T-cell (primary cell): ENCODE measurements at regions of chr14 and their contacts with region 1.

Region 1: GRCh38 chr14:53055003-53055402 is 98.1 kb downstream of the DDHD1 start:
- DNase-seq: peak in 2 of 35 experiments; percentile 1 to 62
- ATAC-seq: peak; percentile 56 to 64 (median 58)
- H3K4me3 ChIP-seq: no peak overlapping the region
- H3K4me3 Mint-ChIP-seq: no peak overlapping the region
- H3K27ac ChIP-seq: no peak overlapping the region
- H3K27ac Mint-ChIP-seq: peak overlapping the region in 1 of 2 donors; percentile 34
- H3K4me1 ChIP-seq: no peaks in the 10 kb centered on the region
- H3K4me1 Mint-ChIP-seq: peaks cover 0 to 11% (median 5%) of the 10 kb centered on the region in 3 donors
- H3K27me3 ChIP-seq: no peaks in the 10 kb centered on the region
- H3K27me3 Mint-ChIP-seq: no peaks in the 10 kb centered on the region

Region 2: GRCh38 chr14:52824507-52824906 is 230.5 kb before region 1 on chr14:
- CTCF ChIA-PET with region 1: interaction called, 5 to 11 read pairs
- POLR2A ChIA-PET with region 1: no interaction called
- DNase-seq: no peak
- ATAC-seq: no peak
- H3K4me3 ChIP-seq: no peak overlapping the region
- H3K4me3 Mint-ChIP-seq: no peak overlapping the region
- H3K27ac ChIP-seq: no peak overlapping the region
- H3K27ac Mint-ChIP-seq: no peak overlapping the region
- H3K4me1 ChIP-seq: no peaks in the 10 kb centered on the region
- H3K4me1 Mint-ChIP-seq: peaks cover 0 to 6% (median 0%) of the 10 kb centered on the region in 3 donors
- H3K27me3 ChIP-seq: peaks cover 0 to 3% of the 10 kb centered on the region in 2 experiments
- H3K27me3 Mint-ChIP-seq: peaks cover 2 to 3% of the 10 kb centered on the region in 2 donors

Region 3: DNA sequence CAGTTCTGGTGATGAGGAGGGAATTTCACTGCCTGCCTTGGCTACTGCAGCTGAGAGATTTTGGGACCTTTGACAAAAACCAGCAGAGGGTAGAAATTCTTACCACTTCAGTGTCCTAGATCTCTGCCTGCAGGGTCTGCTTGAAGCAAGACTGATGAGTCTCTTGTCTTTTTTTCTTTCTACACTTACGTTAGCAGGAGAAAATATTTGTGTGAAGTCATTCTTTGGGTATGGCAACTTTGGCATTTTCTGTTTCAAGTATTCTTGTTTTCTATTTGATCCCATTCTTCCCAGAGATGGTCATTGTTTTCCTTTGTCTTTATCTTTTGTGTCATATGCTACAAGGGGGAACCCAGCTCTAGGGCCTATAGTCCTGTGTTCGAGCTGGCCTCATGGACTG is 38.5 kb before region 1 on chr14:
- CTCF ChIA-PET with region 1: no interaction called
- POLR2A ChIA-PET with region 1: no interaction called
- DNase-seq: no peak
- ATAC-seq: no peak
- H3K4me3 ChIP-seq: no peak overlapping the region
- H3K4me3 Mint-ChIP-seq: no peak overlapping the region
- H3K27ac ChIP-seq: no peak overlapping the region
- H3K27ac Mint-ChIP-seq: no peak overlapping the region
- H3K4me1 ChIP-seq: no peaks in the 10 kb centered on the region
- H3K4me1 Mint-ChIP-seq: no peaks in the 10 kb centered on the region
- H3K27me3 ChIP-seq: no peaks in the 10 kb centered on the region
- H3K27me3 Mint-ChIP-seq: peaks cover 6 to 10% of the 10 kb centered on the region in 2 donors